Mammary epithelial cell (primary cell): ENCODE measurements at regions of chr3 and their contacts with region 1.

Region 1: GRCh38 chr3:128426128-128426921 is 40.4 kb downstream of the DNAJB8 start:
- DNase-seq: peak; percentile 10
- H3K4me3 ChIP-seq: peak overlapping the region in 1 of 3 experiments; percentile 31
- H3K27ac ChIP-seq: no peak overlapping the region
- H3K4me1 ChIP-seq: peaks cover 7% of the 10 kb centered on the region
- H3K27me3 ChIP-seq: no peaks in the 10 kb centered on the region
- CTCF ChIP-seq: peak; percentile 66 to 69

Region 2: DNA sequence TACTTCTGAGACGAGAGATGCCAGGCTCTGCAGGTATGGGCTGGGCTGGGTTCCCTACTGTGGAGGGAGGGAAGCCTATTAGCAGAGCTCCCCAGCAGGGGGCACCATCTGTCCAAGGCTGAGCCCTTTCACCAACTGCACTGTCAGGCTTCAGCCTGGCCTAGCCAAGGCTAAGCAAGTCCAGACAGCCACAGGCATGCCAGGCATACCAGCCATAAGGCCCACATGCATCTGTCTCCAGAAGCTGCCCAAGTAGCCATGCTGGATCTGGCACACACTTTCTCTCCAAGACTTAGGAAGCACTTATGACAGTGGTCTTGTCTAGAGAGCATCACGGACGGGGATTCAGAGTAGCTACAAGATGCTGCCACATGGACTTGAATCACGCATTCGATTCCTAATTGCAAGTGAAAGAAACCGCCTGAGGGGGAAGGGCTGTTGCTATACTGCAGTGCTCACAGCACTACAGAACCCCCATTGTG is 331.1 kb before region 1 on chr3:
- CTCF ChIA-PET with region 1: no interaction called
- dilution Hi-C with region 1: no loop called
- in situ Hi-C with region 1: no loop called
- intact Hi-C with region 1: loop called (anchors 5 kb)
- DNase-seq: peak; percentile 86
- H3K4me3 ChIP-seq: no peak overlapping the region
- H3K27ac ChIP-seq: no peak overlapping the region
- H3K4me1 ChIP-seq: peaks cover 21% of the 10 kb centered on the region
- H3K27me3 ChIP-seq: no peaks in the 10 kb centered on the region
- CTCF ChIP-seq: peak; percentile 90 to 98

Region 3: GRCh38 chr3:128153156-128154041 is 272.9 kb before region 1 on chr3 and contains the start of gene EEFSEC:
- CTCF ChIA-PET with region 1: interaction called, 12 read pairs
- dilution Hi-C with region 1: no loop called
- in situ Hi-C with region 1: no loop called
- intact Hi-C with region 1: no loop called
- DNase-seq: peak; percentile 83
- H3K4me3 ChIP-seq: peak within 1 kb of the TSS; percentile 89 to 97 (median 90)
- H3K27ac ChIP-seq: peak within 1 kb of the TSS; percentile 78
- H3K4me1 ChIP-seq: peaks cover 5% of the 10 kb centered on the region
- H3K27me3 ChIP-seq: no peaks in the 10 kb centered on the region
- CTCF ChIP-seq: no peak
- total RNA-seq, gene EEFSEC: 7.0 to 15.9 TPM

Region 4: GRCh38 chr3:128497387-128498126 is 71.2 kb after region 1 on chr3:
- CTCF ChIA-PET with region 1: no interaction called
- dilution Hi-C with region 1: no loop called
- in situ Hi-C with region 1: no loop called
- intact Hi-C with region 1: loop called (anchors 2 kb)
- DNase-seq: no peak
- H3K4me3 ChIP-seq: peak overlapping the region; percentile 20 to 60 (median 50)
- H3K27ac ChIP-seq: no peak overlapping the region
- H3K4me1 ChIP-seq: peaks cover 6% of the 10 kb centered on the region
- H3K27me3 ChIP-seq: peaks cover 21% of the 10 kb centered on the region
- CTCF ChIP-seq: peak; percentile 40 to 63

Region 5: GRCh38 chr3:128505771-128506170 is 79.4 kb after region 1 on chr3:
- CTCF ChIA-PET with region 1: no interaction called
- dilution Hi-C with region 1: loop called (anchors 5 kb)
- in situ Hi-C with region 1: no loop called
- intact Hi-C with region 1: no loop called
- DNase-seq: no peak
- H3K4me3 ChIP-seq: no peak overlapping the region
- H3K27ac ChIP-seq: no peak overlapping the region
- H3K4me1 ChIP-seq: peaks cover 5% of the 10 kb centered on the region
- H3K27me3 ChIP-seq: no peaks in the 10 kb centered on the region
- CTCF ChIP-seq: no peak

Region 6: DNA sequence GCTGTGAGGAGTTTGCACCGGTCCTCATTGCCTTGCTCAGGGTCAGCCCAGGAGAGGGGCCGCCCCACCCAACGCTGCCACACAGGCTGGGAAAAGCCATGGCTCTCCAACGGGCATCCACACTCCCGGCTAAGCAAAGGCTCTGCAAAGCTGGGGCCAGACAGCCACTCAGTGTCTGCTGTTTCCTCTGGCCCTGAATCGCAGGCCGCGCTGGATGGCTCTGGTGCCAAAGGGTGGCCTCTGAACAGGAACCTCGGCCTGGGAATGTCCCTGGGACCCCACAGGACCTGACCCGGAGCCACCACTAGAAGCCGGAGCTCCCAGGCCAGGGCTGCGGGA is 181.4 kb after region 1 on chr3:
- CTCF ChIA-PET with region 1: no interaction called
- dilution Hi-C with region 1: no loop called
- in situ Hi-C with region 1: no loop called
- intact Hi-C with region 1: loop called (anchors 1 kb)
- DNase-seq: no peak
- H3K4me3 ChIP-seq: peak overlapping the region in 2 of 3 experiments; percentile 46 to 60
- H3K27ac ChIP-seq: no peak overlapping the region
- H3K4me1 ChIP-seq: peaks cover 8% of the 10 kb centered on the region
- H3K27me3 ChIP-seq: no peaks in the 10 kb centered on the region
- CTCF ChIP-seq: no peak